ENCODE measurements at regions of chr9 and their contacts with region 1.

Region 1: DNA sequence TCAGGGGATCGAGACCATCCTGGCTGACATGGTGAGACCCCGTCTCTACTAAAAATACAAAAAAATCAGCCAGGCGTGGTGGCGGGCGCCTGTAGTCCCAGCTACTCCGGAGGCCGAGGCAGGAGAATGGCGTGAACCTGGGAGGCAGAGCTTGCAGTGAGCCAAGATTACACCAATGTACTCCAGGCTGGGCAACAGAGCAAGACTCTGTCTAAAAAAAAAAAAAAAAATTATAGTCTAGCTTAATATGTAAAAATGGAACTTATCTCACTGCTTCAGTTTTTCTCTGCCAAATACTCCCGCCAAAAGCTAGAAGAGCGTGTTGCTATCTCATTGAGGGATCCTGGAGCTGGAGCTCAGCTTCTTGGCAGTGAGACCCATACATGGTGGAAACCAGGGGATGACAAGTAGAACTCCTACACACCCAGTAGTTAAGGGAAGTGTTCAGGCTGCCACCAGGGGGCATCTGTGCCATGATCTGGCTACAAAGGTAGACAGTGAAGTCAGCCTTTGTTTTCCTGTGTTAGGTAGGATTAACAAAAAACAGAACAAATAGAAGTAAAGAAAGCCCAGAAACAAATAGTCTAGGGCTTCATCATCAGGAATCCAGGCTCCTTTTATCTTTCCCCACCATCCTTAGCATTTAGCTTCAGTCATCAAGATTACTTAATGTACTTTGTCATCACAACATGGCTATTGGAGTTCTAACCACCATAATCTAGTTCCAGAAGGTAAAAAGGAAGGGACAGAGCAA is 33.6 kb upstream of the GLIPR2 start:
- DNase-seq: peak; percentile 91
- ATAC-seq: peak; percentile 100
- H3K4me3 Mint-ChIP-seq: no peak overlapping the region
- H3K27ac Mint-ChIP-seq: no peak overlapping the region
- H3K4me1 Mint-ChIP-seq: peaks cover 10% of the 10 kb centered on the region
- H3K27me3 Mint-ChIP-seq: no peaks in the 10 kb centered on the region

Region 2: GRCh38 chr9:36023260-36024048 is 79.5 kb before region 1 on chr9:
- CTCF ChIA-PET with region 1: interaction called, 12 read pairs
- POLR2A ChIA-PET with region 1: no interaction called
- DNase-seq: peak; percentile 79
- ATAC-seq: peak; percentile 88
- H3K4me3 Mint-ChIP-seq: no peak overlapping the region
- H3K27ac Mint-ChIP-seq: no peak overlapping the region
- H3K4me1 Mint-ChIP-seq: no peaks in the 10 kb centered on the region
- H3K27me3 Mint-ChIP-seq: peaks cover 6% of the 10 kb centered on the region

Region 3: GRCh38 chr9:36092509-36093215 is 10.3 kb before region 1 on chr9:
- CTCF ChIA-PET with region 1: interaction called, 34 read pairs
- POLR2A ChIA-PET with region 1: interaction called, 3 read pairs
- DNase-seq: peak; percentile 73
- ATAC-seq: peak; percentile 98
- H3K4me3 Mint-ChIP-seq: no peak overlapping the region
- H3K27ac Mint-ChIP-seq: peak overlapping the region; percentile 84
- H3K4me1 Mint-ChIP-seq: peaks cover 19% of the 10 kb centered on the region
- H3K27me3 Mint-ChIP-seq: no peaks in the 10 kb centered on the region

Region 4: DNA sequence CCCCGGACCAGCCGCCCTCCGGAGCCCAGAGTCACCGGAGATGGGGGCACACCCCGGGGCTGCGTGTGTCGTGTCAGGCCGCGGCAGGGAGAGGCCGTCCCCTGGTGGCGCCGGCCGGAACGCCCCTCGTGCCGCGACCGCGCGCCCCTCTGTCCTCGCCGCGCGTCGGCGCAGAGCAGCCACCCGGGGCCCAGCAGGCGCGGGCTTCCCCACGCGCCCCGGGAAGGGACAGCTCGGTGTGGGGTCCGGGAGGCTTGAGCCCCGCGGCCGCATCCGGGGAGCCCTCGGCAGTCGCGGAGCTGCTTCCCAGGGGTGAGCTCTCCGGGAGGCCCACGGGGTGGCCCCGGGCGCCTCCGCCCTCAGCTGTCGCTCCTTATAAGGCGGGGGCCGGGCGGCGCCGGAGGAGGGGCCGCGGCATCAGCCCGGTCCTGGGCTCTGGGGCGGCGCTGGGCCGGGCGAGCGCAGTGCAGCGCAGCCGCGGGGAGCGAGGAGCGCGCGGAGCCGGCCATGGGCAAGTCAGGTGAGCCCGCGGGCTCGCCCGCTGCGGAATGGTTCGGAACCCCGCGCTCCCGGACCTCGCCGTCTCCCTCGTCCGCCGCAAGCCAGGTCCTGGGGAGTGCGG is 33.5 kb after region 1 on chr9 and contains the start of gene GLIPR2:
- CTCF ChIA-PET with region 1: interaction called, 26 read pairs
- POLR2A ChIA-PET with region 1: interaction called, 7 read pairs
- DNase-seq: peak; percentile 83
- ATAC-seq: peak; percentile 98
- H3K4me3 Mint-ChIP-seq: peak within 1 kb of the TSS; percentile 87
- H3K27ac Mint-ChIP-seq: peak within 1 kb of the TSS; percentile 75
- H3K4me1 Mint-ChIP-seq: peaks cover 51% of the 10 kb centered on the region
- H3K27me3 Mint-ChIP-seq: peaks cover 23% of the 10 kb centered on the region
- total RNA-seq, gene GLIPR2: 67.8 to 73.0 TPM

Region 5: GRCh38 chr9:36158917-36159316 is 56.0 kb after region 1 on chr9:
- CTCF ChIA-PET with region 1: interaction called, 304 read pairs
- POLR2A ChIA-PET with region 1: interaction called, 3 read pairs
- DNase-seq: no peak
- ATAC-seq: no peak
- H3K4me3 Mint-ChIP-seq: no peak overlapping the region
- H3K27ac Mint-ChIP-seq: peak overlapping the region; percentile 14
- H3K4me1 Mint-ChIP-seq: peaks cover 20% of the 10 kb centered on the region
- H3K27me3 Mint-ChIP-seq: no peaks in the 10 kb centered on the region

Region 6: GRCh38 chr9:36328798-36329411 is 226.0 kb after region 1 on chr9:
- CTCF ChIA-PET with region 1: interaction called, 11 read pairs
- POLR2A ChIA-PET with region 1: no interaction called
- DNase-seq: peak; percentile 75
- ATAC-seq: peak; percentile 57
- H3K4me3 Mint-ChIP-seq: no peak overlapping the region
- H3K27ac Mint-ChIP-seq: no peak overlapping the region
- H3K4me1 Mint-ChIP-seq: peaks cover 2% of the 10 kb centered on the region
- H3K27me3 Mint-ChIP-seq: no peaks in the 10 kb centered on the region

Region 7: GRCh38 chr9:36415822-36416515 is 313.1 kb after region 1 on chr9:
- CTCF ChIA-PET with region 1: no interaction called
- POLR2A ChIA-PET with region 1: no interaction called
- DNase-seq: no peak
- ATAC-seq: no peak
- H3K4me3 Mint-ChIP-seq: no peak overlapping the region
- H3K27ac Mint-ChIP-seq: no peak overlapping the region
- H3K4me1 Mint-ChIP-seq: no peaks in the 10 kb centered on the region
- H3K27me3 Mint-ChIP-seq: no peaks in the 10 kb centered on the region

Measured in activated CD8-positive, alpha-beta T cell treated with anti-CD3 and anti-CD28 coated beads, Interleukin-2, amount 10 ng/mL, durations not matched to agents 7 days and 5 days (primary cell).